Colonic mucosa (tissue), 4 donors: ENCODE measurements at regions of chr10 and their contacts with region 1.

Region 1: GRCh38 chr10:31031558-31032257 is at the start of gene ZNF438:
- DNase-seq: peak; percentile 93
- H3K4me3 ChIP-seq: peak within 1 kb of the TSS; percentile 47
- H3K27ac ChIP-seq: peak within 1 kb of the TSS; percentile 95
- H3K4me1 ChIP-seq: no peaks in the 10 kb centered on the region
- H3K27me3 ChIP-seq: no peaks in the 10 kb centered on the region
- CTCF ChIP-seq: peak; percentile 56
- total RNA-seq, gene ZNF438: 2.7 to 4.3 TPM

Region 2: GRCh38 chr10:29112827-29113615 is 1918.7 kb before region 1 on chr10:
- intact Hi-C with region 1: no loop called
- DNase-seq: no peak
- H3K4me3 ChIP-seq: no peak overlapping the region
- H3K27ac ChIP-seq: no peak overlapping the region
- H3K4me1 ChIP-seq: no peaks in the 10 kb centered on the region
- H3K27me3 ChIP-seq: no peaks in the 10 kb centered on the region
- CTCF ChIP-seq: no peak

Region 3: GRCh38 chr10:30783939-30784500 is 247.7 kb before region 1 on chr10:
- intact Hi-C with region 1: loop called (anchors 10 kb)
- DNase-seq: peak; percentile 84
- H3K4me3 ChIP-seq: peak overlapping the region; percentile 53
- H3K27ac ChIP-seq: peak overlapping the region; percentile 81
- H3K4me1 ChIP-seq: no peaks in the 10 kb centered on the region
- H3K27me3 ChIP-seq: no peaks in the 10 kb centered on the region
- CTCF ChIP-seq: peak; percentile 71

Region 4: GRCh38 chr10:31157123-31158010 is 125.7 kb after region 1 on chr10:
- intact Hi-C with region 1: no loop called
- DNase-seq: no peak
- H3K4me3 ChIP-seq: no peak overlapping the region
- H3K27ac ChIP-seq: no peak overlapping the region
- H3K4me1 ChIP-seq: no peaks in the 10 kb centered on the region
- H3K27me3 ChIP-seq: no peaks in the 10 kb centered on the region
- CTCF ChIP-seq: no peak